ENCODE measurements at regions of chr12 and their contacts with region 1.

Region 1: GRCh38 chr12:20451761-20452160 is 83.4 kb downstream of the PDE3A start:
- DNase-seq: no peak
- ATAC-seq: no peak
- H3K4me3 ChIP-seq: no peak overlapping the region
- H3K27ac ChIP-seq: no peak overlapping the region
- H3K4me1 ChIP-seq: no peaks in the 10 kb centered on the region
- H3K27me3 ChIP-seq: no peaks in the 10 kb centered on the region

Region 2: GRCh38 chr12:20280515-20280914 is 171.2 kb before region 1 on chr12:
- intact Hi-C with region 1: no loop called
- DNase-seq: no peak
- ATAC-seq: peak; percentile 54 to 76
- H3K4me3 ChIP-seq: no peak overlapping the region
- H3K27ac ChIP-seq: no peak overlapping the region
- H3K4me1 ChIP-seq: peaks cover 2% of the 10 kb centered on the region
- H3K27me3 ChIP-seq: no peaks in the 10 kb centered on the region

Region 3: DNA sequence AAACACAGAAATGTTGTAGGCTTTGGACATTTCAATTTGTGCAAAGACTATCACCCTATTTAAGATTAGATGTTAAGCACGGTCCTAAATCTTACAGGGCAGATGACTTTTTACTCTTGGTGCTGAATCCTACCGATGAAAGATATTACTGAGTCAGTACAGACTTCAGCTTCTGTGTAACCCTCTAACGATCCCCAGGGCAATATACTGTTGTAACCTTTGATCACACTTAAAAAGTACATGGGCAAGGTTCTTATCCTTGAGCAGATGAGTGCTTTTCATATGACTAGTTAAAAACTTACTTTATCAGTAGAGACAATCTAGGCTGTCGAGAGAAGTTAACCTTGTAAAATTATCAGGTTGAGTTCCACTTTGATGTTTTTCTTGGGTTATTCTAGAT is 60.9 kb before region 1 on chr12:
- intact Hi-C with region 1: loop called in 1 of 4 experiments (anchors 5 kb)
- DNase-seq: no peak
- ATAC-seq: peak in 1 of 2 donors; percentile 45
- H3K4me3 ChIP-seq: no peak overlapping the region
- H3K27ac ChIP-seq: no peak overlapping the region
- H3K4me1 ChIP-seq: no peaks in the 10 kb centered on the region
- H3K27me3 ChIP-seq: no peaks in the 10 kb centered on the region

Region 4: GRCh38 chr12:20601668-20602280 is 150.0 kb after region 1 on chr12:
- intact Hi-C with region 1: loop called in 1 of 4 experiments (anchors 10 kb)
- DNase-seq: no peak
- ATAC-seq: peak in 1 of 2 donors; percentile 29
- H3K4me3 ChIP-seq: peak overlapping the region; percentile 15
- H3K27ac ChIP-seq: no peak overlapping the region
- H3K4me1 ChIP-seq: no peaks in the 10 kb centered on the region
- H3K27me3 ChIP-seq: no peaks in the 10 kb centered on the region

Measured in right cardiac atrium (tissue), 5 donors.